IMR-90 (cell line): ENCODE measurements at regions of chr12 and their contacts with region 1.

Region 1: GRCh38 chr12:3797531-3798049 is 44.7 kb upstream of the CRACR2A start:
- DNase-seq: no peak
- ATAC-seq: no peak
- H3K4me3 ChIP-seq: no peak overlapping the region
- H3K27ac ChIP-seq: no peak overlapping the region
- H3K4me1 ChIP-seq: no peaks in the 10 kb centered on the region
- H3K27me3 ChIP-seq: no peaks in the 10 kb centered on the region
- CTCF ChIP-seq: no peak
- POLR2A ChIP-seq: no peak
- RAD21 ChIP-seq: no peak

Region 2: GRCh38 chr12:3313675-3314663 is 483.6 kb before region 1 on chr12:
- CTCF ChIA-PET with region 1: no interaction called
- POLR2A ChIA-PET with region 1: no interaction called
- dilution Hi-C with region 1: no loop called
- in situ Hi-C with region 1: loop called (anchors 10 kb)
- intact Hi-C with region 1: no loop called
- DNase-seq: peak; percentile 20
- ATAC-seq: peak; percentile 55; the same call in 1 of the 2 replicates
- H3K4me3 ChIP-seq: no peak overlapping the region
- H3K27ac ChIP-seq: no peak overlapping the region
- H3K4me1 ChIP-seq: peaks cover 6% of the 10 kb centered on the region; the same call in 1 of the 2 replicates
- H3K27me3 ChIP-seq: peaks cover 37% of the 10 kb centered on the region
- CTCF ChIP-seq: 0 out of 2 replicates have a peak, but pooled peaks have one; percentile 20
- POLR2A ChIP-seq: no peak
- RAD21 ChIP-seq: peak; percentile 4; the same call in 1 of the 2 replicates

Region 3: GRCh38 chr12:3641428-3642018 is 156.1 kb before region 1 on chr12:
- CTCF ChIA-PET with region 1: no interaction called
- POLR2A ChIA-PET with region 1: no interaction called
- dilution Hi-C with region 1: no loop called
- in situ Hi-C with region 1: no loop called
- intact Hi-C with region 1: no loop called
- DNase-seq: peak; percentile 36
- ATAC-seq: no peak
- H3K4me3 ChIP-seq: no peak overlapping the region
- H3K27ac ChIP-seq: no peak overlapping the region
- H3K4me1 ChIP-seq: no peaks in the 10 kb centered on the region
- H3K27me3 ChIP-seq: peaks cover 11% of the 10 kb centered on the region
- CTCF ChIP-seq: no peak
- POLR2A ChIP-seq: no peak
- RAD21 ChIP-seq: no peak

Region 4: GRCh38 chr12:3761116-3761735 is 36.4 kb before region 1 on chr12:
- CTCF ChIA-PET with region 1: no interaction called
- POLR2A ChIA-PET with region 1: no interaction called
- dilution Hi-C with region 1: no loop called
- in situ Hi-C with region 1: no loop called
- intact Hi-C with region 1: no loop called
- DNase-seq: no peak
- ATAC-seq: no peak
- H3K4me3 ChIP-seq: no peak overlapping the region
- H3K27ac ChIP-seq: no peak overlapping the region
- H3K4me1 ChIP-seq: no peaks in the 10 kb centered on the region
- H3K27me3 ChIP-seq: peaks cover 7% of the 10 kb centered on the region
- CTCF ChIP-seq: no peak
- POLR2A ChIP-seq: no peak
- RAD21 ChIP-seq: no peak